Kidney (tissue), 22 donors: ENCODE measurements at regions of chr5 and their contacts with region 1.

Region 1: GRCh38 chr5:171893290-171893886 is 107.8 kb downstream of the SMIM23 start:
- DNase-seq: no peak
- H3K4me3 ChIP-seq: no peak overlapping the region
- H3K27ac ChIP-seq: no peak overlapping the region
- H3K4me1 ChIP-seq: peaks cover 0 to 6% (median 3%) of the 10 kb centered on the region in 3 donors
- H3K27me3 ChIP-seq: no peaks in the 10 kb centered on the region
- CTCF ChIP-seq: no peak

Region 2: GRCh38 chr5:170782438-170782837 is 1111.0 kb before region 1 on chr5:
- intact Hi-C with region 1: no loop called
- DNase-seq: peak in 2 of 5 donors; percentile 49 to 62
- H3K4me3 ChIP-seq: no peak overlapping the region
- H3K27ac ChIP-seq: no peak overlapping the region
- H3K4me1 ChIP-seq: peaks cover 0 to 5% (median 0%) of the 10 kb centered on the region in 3 donors
- H3K27me3 ChIP-seq: no peaks in the 10 kb centered on the region
- CTCF ChIP-seq: no peak

Region 3: DNA sequence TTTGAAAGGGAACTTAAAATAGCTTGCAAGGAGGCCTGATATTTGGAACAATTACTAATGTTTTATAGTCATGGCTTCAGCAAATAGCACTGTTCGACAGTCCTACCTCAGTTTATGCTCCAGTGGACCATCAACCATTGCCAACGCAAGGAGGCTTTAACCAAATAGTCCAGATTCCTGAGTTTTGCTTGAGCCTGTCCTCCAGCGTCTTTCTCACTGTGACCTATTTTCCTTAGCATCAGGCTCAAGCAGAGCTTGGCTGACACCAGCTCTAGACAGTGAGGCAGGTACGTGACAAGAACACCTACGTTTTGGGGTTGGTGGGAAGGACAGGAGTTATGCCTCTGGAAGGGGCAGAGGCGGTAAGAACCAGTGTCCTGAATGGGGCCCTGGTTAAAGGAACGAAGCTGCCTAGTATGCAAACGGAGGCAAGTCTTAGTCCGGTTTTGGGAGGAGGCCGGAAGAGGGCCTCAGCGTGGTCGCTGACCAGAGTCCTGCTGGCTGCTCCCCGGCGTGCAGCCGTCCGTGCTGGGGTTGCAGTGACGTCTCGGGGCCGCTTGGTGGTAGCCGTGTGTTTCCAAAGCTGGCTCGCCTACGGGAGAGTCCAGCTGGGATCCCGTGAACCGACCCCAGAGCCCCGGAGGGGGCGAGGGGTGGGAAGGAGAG is 474.9 kb before region 1 on chr5:
- intact Hi-C with region 1: loop called (anchors 10 kb)
- DNase-seq: peak; percentile 93 to 95 (median 94)
- H3K4me3 ChIP-seq: peak overlapping the region in 2 of 3 donors; percentile 0 to 44
- H3K27ac ChIP-seq: no peak overlapping the region
- H3K4me1 ChIP-seq: peaks cover 0 to 17% (median 0%) of the 10 kb centered on the region in 3 donors
- H3K27me3 ChIP-seq: peaks cover 2% of the 10 kb centered on the region
- CTCF ChIP-seq: peak; percentile 95